Psoas muscle (tissue), 8 donors: ENCODE measurements at regions of chr22 and their contacts with region 1.

Region 1: GRCh38 chr22:40265783-40266182 is 80.5 kb upstream of the ADSL start:
- DNase-seq: no peak
- ATAC-seq: no peak
- H3K4me3 ChIP-seq: no peak overlapping the region
- H3K27ac ChIP-seq: no peak overlapping the region
- H3K4me1 ChIP-seq: peaks cover 18% of the 10 kb centered on the region
- H3K27me3 ChIP-seq: no peaks in the 10 kb centered on the region
- CTCF ChIP-seq: no peak

Region 2: GRCh38 chr22:40128989-40129388 is 136.8 kb before region 1 on chr22:
- intact Hi-C with region 1: no loop called
- DNase-seq: no peak
- ATAC-seq: peak in 3 of 4 donors; percentile 42 to 64 (median 55)
- H3K4me3 ChIP-seq: no peak overlapping the region
- H3K27ac ChIP-seq: no peak overlapping the region
- H3K4me1 ChIP-seq: peaks cover 11% of the 10 kb centered on the region
- H3K27me3 ChIP-seq: no peaks in the 10 kb centered on the region
- CTCF ChIP-seq: no peak

Region 3: GRCh38 chr22:40300884-40301672 is 35.3 kb after region 1 on chr22:
- intact Hi-C with region 1: loop called in 1 of 2 experiments (anchors 1 kb)
- DNase-seq: no peak
- ATAC-seq: no peak
- H3K4me3 ChIP-seq: no peak overlapping the region
- H3K27ac ChIP-seq: no peak overlapping the region
- H3K4me1 ChIP-seq: no peaks in the 10 kb centered on the region
- H3K27me3 ChIP-seq: no peaks in the 10 kb centered on the region
- CTCF ChIP-seq: no peak

Region 4: GRCh38 chr22:40332319-40332781 is 66.6 kb after region 1 on chr22:
- intact Hi-C with region 1: no loop called
- DNase-seq: no peak
- ATAC-seq: no peak
- H3K4me3 ChIP-seq: no peak overlapping the region
- H3K27ac ChIP-seq: no peak overlapping the region
- H3K4me1 ChIP-seq: no peaks in the 10 kb centered on the region
- H3K27me3 ChIP-seq: no peaks in the 10 kb centered on the region
- CTCF ChIP-seq: no peak

Region 5: GRCh38 chr22:40401532-40401931 is 135.7 kb after region 1 on chr22:
- intact Hi-C with region 1: no loop called
- DNase-seq: no peak
- ATAC-seq: no peak
- H3K4me3 ChIP-seq: no peak overlapping the region
- H3K27ac ChIP-seq: no peak overlapping the region
- H3K4me1 ChIP-seq: peaks cover 8% of the 10 kb centered on the region
- H3K27me3 ChIP-seq: no peaks in the 10 kb centered on the region
- CTCF ChIP-seq: no peak

Region 6: DNA sequence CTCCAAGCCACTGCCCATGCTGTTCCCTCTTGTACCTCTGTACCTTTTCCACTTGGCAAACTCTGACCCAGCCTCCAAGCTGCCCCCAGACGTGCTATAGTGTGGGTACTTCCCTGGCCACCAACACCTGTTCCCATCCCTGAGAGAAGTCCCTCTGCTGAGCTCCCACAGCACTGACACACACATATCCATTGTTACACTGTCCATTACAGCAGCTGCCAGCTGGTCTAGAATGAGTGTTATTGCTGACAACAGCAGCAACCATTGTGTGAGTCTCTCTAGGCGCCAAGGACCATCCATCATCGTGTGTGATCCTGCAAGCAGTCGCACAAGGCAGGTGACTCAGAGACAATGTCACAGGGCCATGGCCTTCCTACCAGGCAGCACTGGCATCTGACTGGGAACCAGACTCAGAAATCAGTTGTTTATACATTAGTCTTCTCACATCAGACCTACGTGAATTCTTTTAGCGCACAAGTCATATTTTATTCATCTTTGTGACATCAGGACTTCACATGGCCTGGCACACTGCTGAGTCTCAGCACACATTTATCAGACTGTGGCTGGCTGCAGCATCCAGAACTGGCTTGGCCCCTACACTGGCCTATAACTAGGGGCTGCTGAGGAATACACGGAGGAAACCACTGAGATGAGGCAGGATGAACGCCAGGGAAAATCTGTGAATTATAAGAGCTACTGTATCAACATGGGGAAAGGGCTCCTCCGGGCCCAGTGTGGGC is 161.0 kb after region 1 on chr22:
- intact Hi-C with region 1: no loop called
- DNase-seq: peak; percentile 71 to 76
- ATAC-seq: peak; percentile 79 to 90 (median 88)
- H3K4me3 ChIP-seq: no peak overlapping the region
- H3K27ac ChIP-seq: peak overlapping the region; percentile 82
- H3K4me1 ChIP-seq: peaks cover 59% of the 10 kb centered on the region
- H3K27me3 ChIP-seq: no peaks in the 10 kb centered on the region
- CTCF ChIP-seq: no peak